Gastrocnemius medialis (tissue), 4 donors: ENCODE measurements at regions of chr3 and their contacts with region 1.

Region 1: DNA sequence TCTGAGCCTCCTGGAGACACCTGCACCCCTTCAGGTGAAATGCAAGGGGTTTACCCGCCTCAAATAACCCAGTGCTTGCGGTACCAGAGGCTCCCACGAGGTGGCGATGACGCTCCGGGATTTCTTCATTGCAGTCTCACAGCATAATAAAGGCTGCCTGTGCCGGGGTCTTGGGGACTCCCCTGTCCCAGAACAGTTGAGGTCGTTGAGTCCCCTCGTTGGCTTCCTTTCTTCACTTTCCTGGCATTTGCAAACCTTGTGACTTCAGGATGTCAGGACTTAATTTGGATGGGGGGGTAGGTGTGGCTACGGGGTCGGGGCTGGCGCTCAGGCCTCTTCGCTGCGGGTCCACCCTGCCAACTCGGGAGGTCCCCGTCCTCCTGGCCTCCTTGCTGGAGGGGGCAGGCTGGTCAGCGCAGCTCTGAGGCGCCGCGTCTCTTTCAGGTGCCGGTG is 1.3 kb downstream of the GNAT1 start:
- DNase-seq: peak in 1 of 2 donors; percentile 47
- ATAC-seq: peak; percentile 39 to 45
- H3K4me3 ChIP-seq: peak overlapping the region in 1 of 4 donors; percentile 25
- H3K27ac ChIP-seq: no peak overlapping the region
- H3K4me1 ChIP-seq: peaks cover 12 to 22% of the 10 kb centered on the region in 2 donors
- H3K27me3 ChIP-seq: peaks cover 15 to 18% (median 16%) of the 10 kb centered on the region in 3 donors
- CTCF ChIP-seq: peak; percentile 87 to 93 (median 93)
- POLR2A ChIP-seq: no peak

Region 2: GRCh38 chr3:49966230-49966942 is 226.3 kb before region 1 on chr3:
- in situ Hi-C with region 1: no loop called
- intact Hi-C with region 1: no loop called
- DNase-seq: no peak
- ATAC-seq: no peak
- H3K4me3 ChIP-seq: no peak overlapping the region
- H3K27ac ChIP-seq: no peak overlapping the region
- H3K4me1 ChIP-seq: peaks cover 0 to 8% of the 10 kb centered on the region in 2 donors
- H3K27me3 ChIP-seq: no peaks in the 10 kb centered on the region
- CTCF ChIP-seq: no peak
- POLR2A ChIP-seq: no peak

Region 3: GRCh38 chr3:50100956-50101845 is 91.5 kb before region 1 on chr3:
- in situ Hi-C with region 1: no loop called
- intact Hi-C with region 1: no loop called
- DNase-seq: no peak
- ATAC-seq: no peak
- H3K4me3 ChIP-seq: no peak overlapping the region
- H3K27ac ChIP-seq: no peak overlapping the region
- H3K4me1 ChIP-seq: no peaks in the 10 kb centered on the region
- H3K27me3 ChIP-seq: no peaks in the 10 kb centered on the region
- CTCF ChIP-seq: no peak
- POLR2A ChIP-seq: no peak

Region 4: GRCh38 chr3:50121416-50122032 is 71.2 kb before region 1 on chr3:
- in situ Hi-C with region 1: loop called (anchors 5 to 10 kb)
- intact Hi-C with region 1: loop called (anchors 1 kb)
- DNase-seq: peak; percentile 45 to 66
- ATAC-seq: peak; percentile 89 to 91
- H3K4me3 ChIP-seq: no peak overlapping the region
- H3K27ac ChIP-seq: peak overlapping the region in 1 of 4 donors; percentile 22
- H3K4me1 ChIP-seq: peaks cover 3 to 5% of the 10 kb centered on the region in 2 donors
- H3K27me3 ChIP-seq: no peaks in the 10 kb centered on the region
- CTCF ChIP-seq: peak; percentile 82 to 93 (median 87)
- POLR2A ChIP-seq: no peak

Region 5: DNA sequence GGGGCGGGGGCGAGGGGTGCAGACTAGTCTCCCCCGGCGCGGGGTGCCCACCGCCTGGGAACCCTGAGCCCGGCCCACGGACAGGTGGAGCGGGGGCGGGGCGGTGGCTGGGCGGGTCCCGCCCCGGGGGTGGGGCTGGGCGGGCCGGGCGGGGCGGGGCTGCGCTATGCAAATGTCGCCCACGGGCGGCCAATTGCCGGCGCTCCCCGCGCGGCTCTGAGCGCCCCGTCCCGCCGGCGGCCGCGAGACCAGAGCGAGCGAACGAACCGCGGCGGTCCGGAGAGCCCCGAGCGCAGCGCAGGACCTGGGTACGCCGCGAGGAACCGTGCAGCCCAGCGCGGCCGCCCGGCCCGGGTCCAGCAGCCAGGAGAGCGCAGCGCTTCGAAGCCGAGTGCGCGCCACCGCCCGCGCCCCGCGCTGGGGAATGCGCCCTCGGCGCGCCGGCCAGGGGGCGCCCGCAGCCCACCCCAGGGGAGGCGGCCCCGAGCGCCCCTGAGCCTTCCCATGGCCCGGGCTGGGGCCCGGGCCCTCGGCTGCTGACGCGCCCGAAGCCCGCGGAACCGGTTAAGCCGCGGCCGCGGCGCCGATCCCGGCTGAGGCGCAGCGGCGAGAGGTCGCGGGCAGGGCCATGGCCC is 37.8 kb before region 1 on chr3 and contains the start of gene SEMA3F:
- in situ Hi-C with region 1: no loop called
- intact Hi-C with region 1: loop called (anchors 1 kb)
- DNase-seq: peak; percentile 33 to 62
- ATAC-seq: peak; percentile 81 to 82
- H3K4me3 ChIP-seq: peak within 1 kb of the TSS; percentile 57 to 73 (median 64)
- H3K27ac ChIP-seq: peak within 1 kb of the TSS; percentile 64 to 82 (median 77)
- H3K4me1 ChIP-seq: peaks cover 14 to 18% of the 10 kb centered on the region in 2 donors
- H3K27me3 ChIP-seq: no peaks in the 10 kb centered on the region
- CTCF ChIP-seq: peak in 3 of 5 experiments; percentile 40 to 55 (median 51)
- POLR2A ChIP-seq: peak; percentile 68 to 79
- total RNA-seq, gene SEMA3F: 5.2 to 40.1 (median 7.5) TPM

Region 6: GRCh38 chr3:50245831-50246516 is 53.3 kb after region 1 on chr3:
- in situ Hi-C with region 1: no loop called
- intact Hi-C with region 1: loop called (anchors 1 kb)
- DNase-seq: peak; percentile 78 to 84
- ATAC-seq: peak; percentile 73 to 76
- H3K4me3 ChIP-seq: peak overlapping the region; percentile 57 to 64 (median 61)
- H3K27ac ChIP-seq: peak overlapping the region; percentile 80 to 96 (median 87)
- H3K4me1 ChIP-seq: peaks cover 76 to 92% of the 10 kb centered on the region in 2 donors
- H3K27me3 ChIP-seq: no peaks in the 10 kb centered on the region
- CTCF ChIP-seq: peak; percentile 95 to 100 (median 99)
- POLR2A ChIP-seq: no peak

Region 7: GRCh38 chr3:50256351-50256750 is 63.6 kb after region 1 on chr3:
- in situ Hi-C with region 1: no loop called
- intact Hi-C with region 1: no loop called
- DNase-seq: no peak
- ATAC-seq: no peak
- H3K4me3 ChIP-seq: no peak overlapping the region
- H3K27ac ChIP-seq: peak overlapping the region; percentile 78 to 96 (median 87)
- H3K4me1 ChIP-seq: peaks cover 24 to 50% of the 10 kb centered on the region in 2 donors
- H3K27me3 ChIP-seq: no peaks in the 10 kb centered on the region
- CTCF ChIP-seq: no peak
- POLR2A ChIP-seq: no peak

Region 8: GRCh38 chr3:50272911-50273693 is 80.4 kb after region 1 on chr3:
- in situ Hi-C with region 1: no loop called
- intact Hi-C with region 1: loop called (anchors 1 kb)
- DNase-seq: peak; percentile 68 to 80
- ATAC-seq: peak; percentile 82 to 85
- H3K4me3 ChIP-seq: peak overlapping the region; percentile 38 to 56 (median 51)
- H3K27ac ChIP-seq: peak overlapping the region in 2 of 4 donors; percentile 8 to 15
- H3K4me1 ChIP-seq: peaks cover 17 to 38% of the 10 kb centered on the region in 2 donors
- H3K27me3 ChIP-seq: no peaks in the 10 kb centered on the region
- CTCF ChIP-seq: peak; percentile 97 to 99 (median 99)
- POLR2A ChIP-seq: peak in 1 of 2 donors; percentile 11